ENCODE measurements at regions of chr2 and their contacts with region 1.

Region 1: DNA sequence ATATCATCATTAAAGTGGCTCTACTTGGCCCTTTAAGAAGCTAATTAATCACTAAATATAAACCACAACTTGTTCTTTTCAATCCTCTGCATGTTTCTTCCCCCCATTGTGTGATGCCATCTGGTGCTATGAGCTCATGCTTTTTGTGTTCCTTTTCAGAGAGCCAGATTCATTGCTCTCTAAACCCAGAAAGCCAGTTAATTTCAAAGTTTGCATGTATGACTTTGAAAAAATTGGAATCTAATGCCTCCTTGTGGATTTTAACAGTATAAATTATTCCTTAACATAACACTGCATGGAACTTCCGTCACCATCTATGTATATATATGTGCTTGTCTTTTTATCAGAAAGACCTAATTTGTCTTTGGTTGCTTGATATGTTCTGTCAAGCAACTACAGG is 31.1 kb downstream of the TMEM178A start:
- DNase-seq: no peak
- H3K4me3 Mint-ChIP-seq: no peak overlapping the region
- H3K27ac Mint-ChIP-seq: no peak overlapping the region
- H3K4me1 Mint-ChIP-seq: peaks cover 11% of the 10 kb centered on the region
- H3K27me3 Mint-ChIP-seq: no peaks in the 10 kb centered on the region
- CTCF ChIP-seq: no peak

Region 2: DNA sequence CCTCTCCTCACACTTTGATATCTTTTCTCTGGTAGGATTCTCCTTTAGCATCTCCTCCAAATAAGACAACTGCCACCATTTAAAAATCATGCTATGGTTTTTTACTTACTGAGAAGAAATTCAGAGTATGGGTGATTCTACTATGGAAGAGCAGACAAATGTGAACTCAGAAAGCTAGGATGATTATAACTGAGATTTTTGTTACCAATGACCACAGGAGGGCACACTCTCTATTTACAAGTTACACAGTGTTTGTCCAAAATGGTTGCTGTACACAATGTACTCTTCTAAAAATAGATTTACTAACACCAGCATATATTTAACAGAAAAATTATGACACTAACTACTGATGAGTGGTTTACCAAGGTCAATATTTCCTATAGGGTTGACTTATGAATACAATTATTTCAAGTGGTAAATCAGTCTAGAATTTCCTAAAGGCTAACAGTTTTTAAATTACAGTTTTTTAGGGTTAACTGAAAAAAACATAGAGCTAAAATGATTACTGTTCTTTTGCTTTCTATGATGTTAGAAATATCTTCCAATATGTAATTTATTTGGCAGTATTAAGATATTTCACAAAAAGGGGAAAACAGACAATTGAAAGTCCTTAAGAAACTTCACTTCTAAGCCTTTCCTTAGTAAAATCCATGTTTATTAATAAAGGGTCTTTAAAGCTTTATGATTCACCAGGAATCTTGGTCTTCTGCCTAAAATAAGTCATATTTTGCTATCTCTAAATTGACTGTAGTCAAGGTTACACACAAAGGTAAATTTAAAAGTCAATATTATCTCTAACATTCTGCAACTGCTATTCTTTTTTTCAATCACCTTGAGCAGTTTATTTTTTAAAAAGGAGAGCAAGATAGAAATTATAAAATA is 317.0 kb before region 1 on chr2:
- CTCF ChIA-PET with region 1: interaction called, 4 read pairs
- intact Hi-C with region 1: loop called (anchors 1 kb)
- DNase-seq: peak; percentile 17
- H3K4me3 Mint-ChIP-seq: no peak overlapping the region
- H3K27ac Mint-ChIP-seq: no peak overlapping the region
- H3K4me1 Mint-ChIP-seq: peaks cover 14% of the 10 kb centered on the region
- H3K27me3 Mint-ChIP-seq: no peaks in the 10 kb centered on the region
- CTCF ChIP-seq: no peak

Region 3: GRCh38 chr2:39513641-39514094 is 183.2 kb before region 1 on chr2:
- CTCF ChIA-PET with region 1: interaction called, 3 read pairs
- intact Hi-C with region 1: loop called (anchors 2 kb)
- DNase-seq: peak; percentile 69
- H3K4me3 Mint-ChIP-seq: no peak overlapping the region
- H3K27ac Mint-ChIP-seq: peak overlapping the region; percentile 15
- H3K4me1 Mint-ChIP-seq: peaks cover 39% of the 10 kb centered on the region
- H3K27me3 Mint-ChIP-seq: no peaks in the 10 kb centered on the region
- CTCF ChIP-seq: peak; percentile 68

Region 4: DNA sequence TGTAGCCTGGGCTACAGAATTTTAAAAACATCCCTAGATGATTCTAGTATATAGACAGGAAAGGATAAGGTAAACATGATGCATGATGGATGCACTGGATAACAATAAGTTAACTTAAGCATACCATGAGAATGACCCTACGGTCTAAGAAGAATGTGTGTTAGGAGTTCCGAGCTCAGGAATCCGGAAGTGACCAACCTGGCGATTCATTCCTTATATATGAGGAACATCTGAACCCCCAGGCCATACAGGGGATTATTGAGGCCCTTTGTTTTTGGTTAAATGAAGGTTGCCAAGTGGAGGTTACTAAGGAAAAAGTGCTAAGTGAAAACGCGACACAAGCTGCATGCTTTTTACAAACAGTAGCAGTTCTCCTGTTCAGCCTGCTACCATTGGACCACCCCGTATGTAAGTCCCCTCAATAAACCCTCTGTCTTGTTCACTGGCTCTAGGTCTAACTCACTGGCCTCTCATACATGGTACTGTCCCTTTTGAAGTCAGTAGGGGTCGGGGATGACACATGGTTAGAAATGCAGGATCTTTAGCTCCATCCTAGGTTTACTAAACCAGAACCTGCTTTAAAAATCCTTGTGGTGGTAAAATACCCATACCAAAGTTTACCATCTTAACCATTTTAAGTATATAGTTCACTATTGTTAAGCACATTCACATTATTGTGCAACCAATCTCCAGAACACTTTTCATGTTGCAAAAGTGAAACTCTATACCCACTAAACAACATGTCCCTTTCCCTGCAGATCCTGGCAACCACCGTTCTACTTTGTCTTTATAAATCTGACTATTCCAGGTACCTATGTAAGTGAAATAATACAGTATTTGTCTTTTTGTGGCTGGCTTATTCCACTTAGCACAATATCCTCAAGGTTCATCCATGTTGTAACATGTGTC is 148.8 kb before region 1 on chr2:
- CTCF ChIA-PET with region 1: no interaction called
- intact Hi-C with region 1: no loop called
- DNase-seq: peak; percentile 14
- H3K4me3 Mint-ChIP-seq: no peak overlapping the region
- H3K27ac Mint-ChIP-seq: no peak overlapping the region
- H3K4me1 Mint-ChIP-seq: peaks cover 33% of the 10 kb centered on the region
- H3K27me3 Mint-ChIP-seq: peaks cover 12% of the 10 kb centered on the region
- CTCF ChIP-seq: no peak

Region 5: DNA sequence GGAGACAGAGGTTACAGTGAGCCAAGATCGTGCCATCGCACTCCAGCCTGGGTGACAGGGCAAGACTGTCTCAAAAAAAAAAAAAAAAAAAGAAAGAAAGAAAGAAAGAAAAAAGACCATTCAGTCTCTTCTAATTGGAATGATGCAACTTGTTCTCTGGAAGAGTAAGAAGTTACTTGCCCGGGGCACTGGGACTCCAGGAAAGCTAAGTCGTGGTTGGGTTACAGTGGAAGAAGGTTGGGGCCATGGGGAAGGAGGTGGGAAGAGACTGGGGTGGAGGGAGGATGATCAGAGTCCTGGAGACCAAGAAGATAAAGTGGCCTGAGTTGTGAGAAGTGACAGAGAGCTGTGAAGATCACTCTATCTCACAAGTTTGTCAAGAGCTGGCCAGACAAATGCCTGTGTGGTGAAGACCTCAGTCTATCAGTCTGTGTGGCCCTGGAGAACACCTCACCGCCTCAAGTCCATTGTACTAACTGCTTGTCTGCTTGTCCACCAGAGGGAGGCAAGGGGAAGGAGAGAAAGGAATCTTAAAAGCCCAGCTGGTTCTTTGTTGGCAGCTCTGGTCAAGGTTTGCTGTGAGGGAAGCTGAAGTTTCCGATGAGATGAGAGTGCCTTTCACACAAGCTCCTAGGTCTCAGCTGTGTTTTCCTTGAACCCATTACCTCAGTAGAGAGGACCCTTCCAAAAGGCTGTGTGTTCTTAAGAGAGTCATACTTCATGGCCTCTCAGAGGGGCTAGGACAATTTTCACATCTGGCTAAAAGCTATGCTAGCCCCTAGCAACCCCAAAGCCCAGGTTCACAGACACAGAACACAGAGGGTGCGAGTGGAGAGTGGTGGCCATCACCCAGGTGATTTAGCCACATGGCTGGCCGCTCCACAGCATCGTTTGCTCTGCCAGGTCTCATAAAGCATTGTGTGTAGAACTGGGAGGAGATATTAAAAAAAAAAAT is 103.1 kb before region 1 on chr2:
- CTCF ChIA-PET with region 1: interaction called, 16 read pairs
- intact Hi-C with region 1: loop called (anchors 1 kb)
- DNase-seq: peak; percentile 53
- H3K4me3 Mint-ChIP-seq: no peak overlapping the region
- H3K27ac Mint-ChIP-seq: no peak overlapping the region
- H3K4me1 Mint-ChIP-seq: no peaks in the 10 kb centered on the region
- H3K27me3 Mint-ChIP-seq: no peaks in the 10 kb centered on the region
- CTCF ChIP-seq: peak; percentile 46

Region 6: GRCh38 chr2:39642051-39642742 is 54.6 kb before region 1 on chr2:
- CTCF ChIA-PET with region 1: no interaction called
- intact Hi-C with region 1: loop called (anchors 2 kb)
- DNase-seq: peak; percentile 69
- H3K4me3 Mint-ChIP-seq: no peak overlapping the region
- H3K27ac Mint-ChIP-seq: no peak overlapping the region
- H3K4me1 Mint-ChIP-seq: peaks cover 24% of the 10 kb centered on the region
- H3K27me3 Mint-ChIP-seq: no peaks in the 10 kb centered on the region
- CTCF ChIP-seq: no peak

Region 7: DNA sequence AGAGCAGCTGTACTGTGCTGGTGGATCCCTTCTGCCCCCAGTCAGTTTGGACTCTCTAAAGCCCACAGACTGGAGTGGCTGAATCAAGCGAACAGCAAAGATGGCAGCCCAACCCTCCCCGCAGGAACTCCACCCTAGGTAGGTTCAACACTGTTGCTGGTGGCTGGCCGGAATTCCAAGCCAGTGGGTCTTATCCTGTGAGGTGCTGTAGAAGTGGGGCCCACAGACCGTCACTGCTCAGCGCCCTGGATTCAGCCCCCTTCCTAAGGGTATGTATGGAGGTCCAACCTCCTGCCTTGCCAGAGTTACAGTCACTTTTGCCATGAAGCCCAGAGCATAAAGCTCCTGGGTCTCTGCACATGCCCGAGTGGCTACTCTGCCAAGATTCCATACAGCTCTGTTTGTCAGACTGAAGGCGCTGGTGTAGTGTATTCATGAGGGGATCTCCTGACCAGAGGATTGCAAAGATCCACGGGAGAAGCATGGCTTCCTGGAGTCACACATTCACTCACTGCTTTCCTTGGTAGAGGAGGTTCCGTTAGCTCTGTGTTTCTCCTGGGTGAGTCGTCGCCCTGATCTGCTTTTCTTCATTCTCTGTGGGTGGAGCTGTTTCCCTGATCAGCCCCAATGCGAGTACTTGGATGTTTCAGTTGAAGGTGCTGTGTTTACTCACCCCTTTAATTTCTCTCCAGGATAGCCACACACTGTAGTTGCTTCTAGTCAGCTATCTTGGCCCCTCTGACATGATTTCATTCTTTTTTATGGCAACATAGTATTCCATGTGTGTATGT is 375.8 kb after region 1 on chr2:
- CTCF ChIA-PET with region 1: no interaction called
- intact Hi-C with region 1: no loop called
- DNase-seq: no peak
- H3K4me3 Mint-ChIP-seq: no peak overlapping the region
- H3K27ac Mint-ChIP-seq: no peak overlapping the region
- H3K4me1 Mint-ChIP-seq: no peaks in the 10 kb centered on the region
- H3K27me3 Mint-ChIP-seq: peaks cover 14% of the 10 kb centered on the region
- CTCF ChIP-seq: no peak

Measured in Calu3 (cell line).